Mucosa of descending colon (tissue), 3 donors: ENCODE measurements at regions of chr16 and their contacts with region 1.

Region 1: DNA sequence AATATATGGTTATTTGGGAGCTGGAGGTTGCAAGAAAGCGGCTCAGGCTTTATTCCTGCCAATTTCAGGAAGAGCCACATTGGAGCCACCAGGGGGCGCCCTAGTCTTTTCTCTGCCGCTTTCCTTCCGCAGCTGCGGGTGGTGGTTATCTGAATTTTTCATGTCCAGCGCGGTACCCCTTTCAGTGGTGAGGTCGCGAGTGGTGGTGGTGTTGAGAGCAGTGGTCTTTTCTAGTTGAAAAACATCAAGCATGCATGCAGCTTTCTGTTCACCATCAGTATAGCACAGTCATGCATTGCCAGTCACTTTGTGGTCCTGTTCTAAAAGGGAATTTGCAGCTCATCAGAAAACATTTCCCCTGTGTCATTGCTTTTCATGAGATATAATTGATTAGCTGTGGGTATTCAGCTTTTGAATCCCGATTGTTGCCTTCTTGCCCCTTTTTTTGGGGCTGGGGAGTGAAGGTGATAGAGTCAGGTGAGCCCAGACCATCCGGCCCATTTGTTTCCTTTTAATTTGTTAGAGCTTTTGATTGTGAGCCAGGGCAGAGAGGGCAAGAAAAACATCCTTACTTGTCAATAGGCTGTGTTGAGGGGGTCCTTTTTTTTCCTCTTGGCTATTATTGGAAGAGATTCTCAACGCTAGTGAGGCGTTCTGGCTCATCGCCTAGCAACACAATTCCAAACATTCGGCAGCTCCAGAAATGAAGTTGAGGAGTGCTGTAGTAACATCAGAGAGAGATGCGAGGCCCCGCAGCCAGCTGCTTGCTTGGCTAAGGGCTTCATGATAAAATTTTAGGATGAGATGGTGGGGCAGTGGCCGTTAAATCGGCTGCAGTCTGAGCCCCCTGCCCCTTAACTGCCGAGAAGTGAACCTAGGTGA is 119.0 kb downstream of the SNX29 start:
- DNase-seq: peak in 2 of 3 donors; percentile 72 to 78
- ATAC-seq: peak; percentile 60
- H3K4me3 ChIP-seq: no peak overlapping the region
- H3K4me1 ChIP-seq: peaks cover 15% of the 10 kb centered on the region
- CTCF ChIP-seq: peak; percentile 73

Region 2: DNA sequence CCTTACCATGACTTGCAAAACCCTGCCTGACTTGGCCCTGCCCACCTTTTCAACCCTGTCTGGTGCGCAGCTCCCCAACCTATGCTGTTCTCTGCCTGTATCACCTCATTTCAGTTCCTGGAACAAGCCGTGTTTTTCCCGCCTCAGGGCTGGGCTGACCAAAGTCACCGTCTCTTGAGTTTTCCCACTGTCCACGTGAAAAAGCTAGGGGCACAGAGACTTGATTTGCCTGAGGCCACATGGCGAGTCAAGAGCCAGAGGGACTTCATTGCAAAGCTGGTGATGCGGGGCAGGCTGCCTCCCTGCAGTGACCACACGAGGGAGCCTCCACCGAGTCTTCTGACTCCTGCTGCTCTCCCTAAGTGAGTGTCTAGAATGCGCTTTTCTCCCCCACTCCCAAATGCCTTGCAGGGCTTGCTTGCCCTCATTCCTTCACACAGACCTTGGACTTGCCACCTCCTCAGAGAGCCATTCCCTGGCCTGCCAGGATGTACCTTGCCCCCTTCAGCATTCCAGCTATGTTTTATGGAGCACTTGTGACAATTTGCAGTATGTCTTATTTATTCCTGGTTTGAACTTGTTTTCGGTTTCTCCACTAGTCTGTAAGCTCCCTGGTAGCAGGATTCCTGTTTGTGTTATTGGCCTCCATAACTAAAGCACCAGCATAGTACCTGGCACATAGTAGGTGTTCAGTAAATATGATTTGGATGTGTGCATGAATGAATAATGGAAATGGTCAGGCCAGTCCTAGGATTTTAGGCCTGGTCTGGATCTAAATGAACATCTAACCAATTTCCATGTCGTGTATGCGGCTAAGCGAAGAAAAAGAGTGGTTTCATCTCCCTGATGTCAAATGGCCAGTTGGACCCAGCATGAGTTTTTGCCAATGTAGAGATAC is 133.3 kb after region 1 on chr16:
- intact Hi-C with region 1: loop called in 1 of 2 experiments (anchors 10 kb)
- DNase-seq: peak; percentile 70 to 86 (median 85)
- ATAC-seq: peak; percentile 96
- H3K4me3 ChIP-seq: no peak overlapping the region
- H3K4me1 ChIP-seq: peaks cover 14% of the 10 kb centered on the region
- CTCF ChIP-seq: peak; percentile 79

Region 3: DNA sequence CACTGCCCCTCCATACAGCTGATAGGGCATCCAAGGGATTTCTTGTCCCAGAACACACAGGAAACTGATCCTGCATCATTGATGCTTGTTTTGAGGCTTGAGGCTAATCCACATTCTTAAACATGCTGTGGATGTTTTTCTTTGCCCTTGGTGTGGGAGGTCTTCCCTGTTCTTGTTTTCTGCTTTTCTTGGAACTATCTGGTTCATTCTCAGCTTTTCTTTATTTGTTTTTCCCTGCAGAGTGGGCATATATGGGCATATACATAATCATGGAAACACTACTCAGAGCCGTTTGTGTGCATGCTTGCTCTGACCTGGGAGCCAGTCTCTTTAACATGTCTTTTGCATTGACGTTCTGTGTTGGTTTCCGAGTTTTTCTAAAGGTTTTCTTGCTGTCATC is 181.0 kb after region 1 on chr16:
- intact Hi-C with region 1: loop called in 1 of 2 experiments (anchors 5 kb)
- DNase-seq: no peak
- ATAC-seq: no peak
- H3K4me3 ChIP-seq: no peak overlapping the region
- H3K4me1 ChIP-seq: no peaks in the 10 kb centered on the region
- CTCF ChIP-seq: no peak

Region 4: GRCh38 chr16:12819126-12820117 is 723.9 kb after region 1 on chr16:
- intact Hi-C with region 1: loop called in 1 of 2 experiments (anchors 10 kb)
- DNase-seq: peak; percentile 70 to 85 (median 73)
- ATAC-seq: peak; percentile 88
- H3K4me3 ChIP-seq: no peak overlapping the region
- H3K4me1 ChIP-seq: no peaks in the 10 kb centered on the region
- CTCF ChIP-seq: peak; percentile 76

Region 5: GRCh38 chr16:13453938-13454553 is 1358.5 kb after region 1 on chr16:
- intact Hi-C with region 1: loop called in 1 of 2 experiments (anchors 10 kb)
- DNase-seq: peak in 1 of 3 donors; percentile 62
- ATAC-seq: no peak
- H3K4me3 ChIP-seq: no peak overlapping the region
- H3K4me1 ChIP-seq: no peaks in the 10 kb centered on the region
- CTCF ChIP-seq: no peak